ENCODE measurements at regions of chr6 and their contacts with region 1.

Region 1: DNA sequence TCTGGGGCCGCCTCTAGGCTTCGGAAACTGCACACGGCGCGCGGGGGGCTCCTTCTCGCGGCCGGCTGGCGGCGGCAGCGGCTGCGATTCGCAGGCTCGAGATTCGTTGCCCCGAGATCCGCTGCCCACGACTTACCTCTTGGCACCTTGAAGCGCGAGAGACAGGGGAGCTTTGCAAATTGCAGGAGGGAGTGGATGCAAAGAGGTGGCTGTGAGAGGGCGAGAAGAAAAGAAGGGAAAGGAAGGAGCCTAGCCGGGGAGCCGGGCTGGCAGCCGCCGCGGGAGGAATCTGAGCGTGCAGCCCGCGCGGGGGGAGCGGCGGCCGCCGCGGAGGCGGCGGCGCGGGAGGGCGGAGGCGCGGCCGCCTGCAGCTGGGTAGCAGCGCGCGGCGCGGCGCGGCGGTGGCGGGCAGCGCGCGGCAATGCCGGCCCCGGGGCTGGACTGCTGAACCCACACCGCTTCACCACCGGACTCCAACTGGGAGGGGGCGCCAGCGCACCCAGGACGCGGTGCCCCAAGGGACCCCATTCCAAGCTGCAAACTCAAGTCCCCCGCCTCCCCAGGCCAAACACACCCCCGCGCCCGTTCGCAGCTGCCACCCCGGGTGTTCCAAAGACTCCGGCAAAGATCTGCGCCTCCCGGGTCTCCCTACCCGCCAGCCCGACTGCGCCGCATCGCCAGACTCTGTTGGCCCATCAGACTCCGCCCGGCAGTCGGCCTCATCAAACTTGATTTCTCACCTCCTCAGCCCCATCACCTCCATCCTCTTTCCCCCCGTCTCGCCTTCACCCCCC is 44.2 kb upstream of the SUPT3H start:
- DNase-seq: peak; percentile 37
- H3K4me3 Mint-ChIP-seq: peak overlapping the region; percentile 97
- H3K27ac Mint-ChIP-seq: peak overlapping the region; percentile 94
- H3K4me1 Mint-ChIP-seq: peaks cover 38% of the 10 kb centered on the region
- H3K27me3 Mint-ChIP-seq: peaks cover 26% of the 10 kb centered on the region

Region 2: DNA sequence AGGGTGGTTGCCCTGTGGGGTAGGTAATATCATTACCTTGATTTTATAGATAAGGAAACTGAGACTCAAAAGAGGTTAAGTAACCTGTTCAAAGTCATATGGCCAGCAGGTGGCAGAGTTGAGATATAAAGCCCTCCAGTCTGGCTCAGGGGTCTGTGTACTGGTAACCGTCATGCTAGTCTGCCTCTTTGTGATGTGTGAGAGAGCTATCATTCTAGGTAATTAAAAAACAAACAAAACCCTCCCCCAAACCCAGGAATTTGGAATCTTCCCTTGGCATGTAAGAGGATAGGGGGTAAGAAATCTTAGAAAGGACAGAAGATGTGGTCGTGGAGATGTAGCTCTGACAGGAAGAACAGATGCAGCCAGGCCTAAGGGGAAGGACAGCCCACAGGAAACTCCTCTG is 828.4 kb before region 1 on chr6:
- intact Hi-C with region 1: loop called (anchors 2 kb)
- DNase-seq: peak; percentile 10
- H3K4me3 Mint-ChIP-seq: no peak overlapping the region
- H3K27ac Mint-ChIP-seq: no peak overlapping the region
- H3K4me1 Mint-ChIP-seq: peaks cover 5% of the 10 kb centered on the region
- H3K27me3 Mint-ChIP-seq: peaks cover 8% of the 10 kb centered on the region

Region 3: DNA sequence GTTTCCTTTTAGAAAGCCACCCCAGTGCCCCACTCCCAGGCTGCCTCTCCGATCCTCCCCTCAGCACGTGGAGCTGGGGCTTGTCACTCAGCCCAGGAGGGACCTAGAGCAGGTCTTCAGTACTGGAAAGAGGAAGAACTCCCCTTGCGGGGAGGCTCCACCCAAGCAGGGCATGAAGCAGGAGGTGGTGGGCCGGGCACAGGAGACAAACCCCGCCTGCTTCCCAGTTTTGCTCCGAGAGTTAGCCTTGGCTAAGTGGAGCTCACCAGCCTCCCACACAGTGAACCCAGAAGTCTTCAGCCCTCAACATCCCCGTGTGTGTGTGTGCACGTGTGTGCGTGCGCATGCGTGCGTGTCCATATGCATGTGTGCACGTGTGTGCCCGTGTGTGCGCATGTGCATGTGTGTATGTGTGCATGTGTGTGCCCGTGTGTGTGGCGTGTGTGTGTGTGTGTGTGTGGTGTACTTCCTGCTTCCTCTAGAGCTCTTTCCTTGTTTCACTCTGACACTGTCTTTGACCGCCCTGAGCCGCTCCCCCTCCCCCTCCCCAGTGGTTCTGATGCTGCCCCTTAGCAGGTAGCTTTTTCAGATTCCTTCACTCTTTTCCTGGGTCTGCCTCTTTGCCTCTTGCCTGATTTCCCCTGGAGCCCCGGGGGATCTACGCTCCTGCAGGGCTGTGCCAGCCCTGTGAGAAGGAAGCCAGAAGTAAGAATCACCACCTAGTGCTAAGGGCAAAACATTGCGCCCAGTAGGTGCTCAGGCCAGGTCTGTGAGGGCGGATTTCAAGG is 794.6 kb before region 1 on chr6:
- intact Hi-C with region 1: no loop called
- DNase-seq: no peak
- H3K4me3 Mint-ChIP-seq: no peak overlapping the region
- H3K27ac Mint-ChIP-seq: no peak overlapping the region
- H3K4me1 Mint-ChIP-seq: peaks cover 9% of the 10 kb centered on the region
- H3K27me3 Mint-ChIP-seq: peaks cover 10% of the 10 kb centered on the region

Region 4: GRCh38 chr6:44932651-44933091 is 489.2 kb before region 1 on chr6:
- intact Hi-C with region 1: loop called (anchors 5 kb)
- DNase-seq: no peak
- H3K4me3 Mint-ChIP-seq: peak overlapping the region; percentile 79
- H3K27ac Mint-ChIP-seq: peak overlapping the region; percentile 94
- H3K4me1 Mint-ChIP-seq: peaks cover 56% of the 10 kb centered on the region
- H3K27me3 Mint-ChIP-seq: no peaks in the 10 kb centered on the region

Region 5: DNA sequence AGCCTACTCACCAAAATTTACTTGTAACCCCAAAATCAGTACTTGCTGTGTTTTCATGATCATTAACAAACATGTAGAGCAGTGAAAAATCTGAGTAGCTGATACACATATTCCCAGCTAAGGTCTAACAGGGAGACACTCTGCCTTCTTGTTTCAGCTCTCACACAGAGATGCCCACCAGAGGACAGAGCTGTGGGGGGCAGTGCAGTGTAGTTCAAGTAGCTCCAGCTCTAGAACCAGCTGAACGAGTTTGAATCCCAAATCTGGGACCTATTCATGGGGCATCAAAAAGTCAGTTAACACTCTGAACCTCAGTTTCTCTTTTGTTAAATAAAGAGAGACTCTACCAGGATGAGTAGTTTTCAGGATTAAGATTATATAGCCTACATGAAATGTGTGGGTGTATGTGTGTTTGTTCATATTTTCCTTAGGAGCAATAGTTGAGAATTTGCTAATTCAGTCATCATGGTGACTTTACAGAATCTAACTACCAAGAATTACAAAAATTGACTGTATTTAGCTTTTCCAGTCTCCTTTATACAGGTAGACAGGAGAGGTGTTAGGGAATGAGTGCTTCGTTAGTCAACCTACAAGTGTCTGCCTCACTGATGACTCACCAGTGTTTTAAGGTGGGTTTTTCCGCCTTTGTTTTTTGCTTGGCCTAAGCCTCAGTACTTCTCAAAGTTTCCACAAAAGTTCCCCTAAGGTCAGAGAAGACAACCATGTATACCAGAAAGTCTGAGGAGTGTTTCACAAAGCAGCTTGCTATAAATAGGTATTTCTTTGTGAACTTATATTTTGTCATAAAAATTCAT is 257.7 kb before region 1 on chr6:
- intact Hi-C with region 1: loop called (anchors 2 kb)
- DNase-seq: peak; percentile 31
- H3K4me3 Mint-ChIP-seq: peak overlapping the region; percentile 35
- H3K27ac Mint-ChIP-seq: peak overlapping the region; percentile 89
- H3K4me1 Mint-ChIP-seq: peaks cover 62% of the 10 kb centered on the region
- H3K27me3 Mint-ChIP-seq: no peaks in the 10 kb centered on the region

Region 6: GRCh38 chr6:45479834-45480751 is 58.2 kb after region 1 on chr6:
- intact Hi-C with region 1: loop called (anchors 5 kb)
- DNase-seq: no peak
- H3K4me3 Mint-ChIP-seq: no peak overlapping the region
- H3K27ac Mint-ChIP-seq: no peak overlapping the region
- H3K4me1 Mint-ChIP-seq: peaks cover 16% of the 10 kb centered on the region
- H3K27me3 Mint-ChIP-seq: peaks cover 3% of the 10 kb centered on the region

Region 7: DNA sequence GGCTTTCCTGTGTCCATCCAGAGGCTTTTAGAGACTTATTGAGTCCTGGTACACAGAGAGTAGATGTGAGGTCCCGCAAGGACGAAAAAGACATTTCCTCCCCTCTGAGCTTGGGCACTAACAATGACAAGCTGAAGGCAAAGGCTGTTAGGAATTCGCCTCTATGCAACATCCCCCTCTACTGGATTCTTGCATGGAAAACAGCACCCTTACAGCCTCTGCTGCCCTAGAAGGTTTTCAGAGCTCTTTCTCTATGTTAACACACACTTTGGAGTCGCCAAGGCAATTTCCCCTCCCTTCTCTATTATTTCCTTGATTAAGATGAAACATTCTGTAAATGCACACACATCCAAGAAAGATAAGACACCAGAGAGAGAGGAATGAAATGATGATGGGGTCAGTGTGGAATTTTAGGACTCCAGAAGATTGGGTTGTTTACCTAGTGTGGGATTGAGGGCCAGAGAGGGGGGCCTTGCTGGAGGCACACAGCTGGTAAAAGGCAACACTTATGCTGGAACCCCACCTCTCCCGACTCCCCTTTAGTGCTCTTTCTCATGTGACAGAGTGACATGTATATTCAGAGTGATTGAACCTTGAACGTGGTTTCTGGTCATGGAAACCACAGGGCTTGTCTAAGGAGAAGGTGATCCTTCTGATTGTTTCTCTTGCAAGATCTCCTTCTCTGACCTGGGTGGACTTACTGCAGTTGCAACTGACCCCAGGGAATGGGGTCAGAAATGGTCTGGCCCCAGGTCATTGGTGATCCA is 293.0 kb after region 1 on chr6:
- intact Hi-C with region 1: loop called (anchors 1 kb)
- DNase-seq: peak; percentile 46
- H3K4me3 Mint-ChIP-seq: no peak overlapping the region
- H3K27ac Mint-ChIP-seq: peak overlapping the region; percentile 73
- H3K4me1 Mint-ChIP-seq: peaks cover 38% of the 10 kb centered on the region
- H3K27me3 Mint-ChIP-seq: peaks cover 2% of the 10 kb centered on the region

Region 8: DNA sequence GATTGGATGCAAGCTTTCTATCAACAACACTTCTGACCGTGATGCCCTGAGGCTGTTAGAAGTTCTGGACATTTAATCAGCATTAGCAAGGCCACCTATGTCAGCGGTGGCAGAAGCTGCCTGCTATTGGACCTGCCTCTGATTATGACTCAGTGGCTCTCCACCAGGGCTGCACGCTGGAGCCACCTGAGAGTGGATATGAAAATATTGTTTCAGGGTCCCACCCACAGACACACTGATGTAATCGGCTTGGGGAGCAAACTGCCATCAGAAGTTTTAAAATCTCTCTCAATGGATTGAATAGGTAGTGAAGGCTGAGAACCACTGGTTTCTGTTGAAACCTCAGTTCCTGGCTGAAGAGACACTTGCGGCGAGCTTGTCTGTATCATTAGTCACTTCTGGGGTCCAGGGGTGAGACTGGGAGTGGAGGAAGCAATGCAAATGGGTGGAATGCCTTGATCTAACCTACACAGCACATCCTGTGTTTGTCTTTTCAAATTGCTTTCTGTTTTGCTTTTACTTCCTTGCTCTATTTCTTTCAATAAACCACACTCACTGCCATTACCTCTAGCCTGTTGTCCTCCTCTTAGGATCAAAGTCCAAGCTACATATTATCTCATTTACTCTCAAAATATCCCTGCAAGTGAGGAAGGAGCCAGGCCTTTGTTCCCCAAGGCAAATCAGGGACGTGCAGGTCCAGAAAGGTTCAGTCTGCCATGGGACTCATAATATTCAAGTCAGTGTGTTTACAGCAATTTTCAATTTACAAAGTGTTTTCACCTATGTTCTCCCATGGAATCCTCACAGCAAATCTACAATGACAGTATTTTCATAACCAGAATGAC is 589.6 kb after region 1 on chr6:
- intact Hi-C with region 1: loop called (anchors 5 kb)
- DNase-seq: peak; percentile 63
- H3K4me3 Mint-ChIP-seq: peak overlapping the region; percentile 47
- H3K27ac Mint-ChIP-seq: peak overlapping the region; percentile 74
- H3K4me1 Mint-ChIP-seq: peaks cover 55% of the 10 kb centered on the region
- H3K27me3 Mint-ChIP-seq: peaks cover 11% of the 10 kb centered on the region